CD8-positive, alpha-beta memory T cell (primary cell): ENCODE measurements at regions of chr15 and their contacts with region 1.

Region 1: GRCh38 chr15:78761891-78762385 is 49.3 kb downstream of the ADAMTS7 start:
- DNase-seq: no peak
- H3K4me3 ChIP-seq: peak overlapping the region; percentile 67
- H3K4me3 Mint-ChIP-seq: peak overlapping the region; percentile 29 to 72 (median 64)
- H3K27ac ChIP-seq: peak overlapping the region; percentile 24
- H3K27ac Mint-ChIP-seq: peak overlapping the region in 7 of 8 donors; percentile 57 to 98 (median 82)
- H3K4me1 ChIP-seq: peaks cover 22% of the 10 kb centered on the region
- H3K4me1 Mint-ChIP-seq: peaks cover 17 to 28% (median 22%) of the 10 kb centered on the region in 3 donors
- H3K27me3 ChIP-seq: no peaks in the 10 kb centered on the region
- H3K27me3 Mint-ChIP-seq: no peaks in the 10 kb centered on the region

Region 2: DNA sequence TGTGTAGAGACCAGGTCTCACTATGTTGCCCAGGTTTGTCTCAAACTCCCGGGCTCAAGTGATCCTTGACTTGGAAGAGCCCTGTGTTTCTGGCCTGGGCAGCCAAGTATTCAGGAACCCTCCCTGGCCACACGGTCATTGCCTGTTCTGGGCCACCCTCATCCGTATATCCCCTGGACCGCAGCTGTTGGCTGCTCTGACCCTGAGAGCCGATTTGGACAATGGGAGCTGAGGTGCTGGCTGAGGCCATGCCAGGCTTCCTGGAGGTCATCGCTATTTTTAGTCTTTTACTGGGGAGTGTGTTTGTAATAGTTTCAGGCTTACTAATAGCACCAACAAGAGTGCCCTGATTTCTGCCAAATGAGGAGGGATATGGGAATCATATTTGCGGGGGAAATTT is 11.4 kb before region 1 on chr15:
- CTCF ChIA-PET with region 1: interaction called, 12 read pairs
- POLR2A ChIA-PET with region 1: no interaction called
- DNase-seq: no peak
- H3K4me3 ChIP-seq: no peak overlapping the region
- H3K4me3 Mint-ChIP-seq: peak overlapping the region in 5 of 7 donors; percentile 55 to 76 (median 57)
- H3K27ac ChIP-seq: no peak overlapping the region
- H3K27ac Mint-ChIP-seq: peak overlapping the region in 2 of 8 donors; percentile 32 to 43
- H3K4me1 ChIP-seq: no peaks in the 10 kb centered on the region
- H3K4me1 Mint-ChIP-seq: peaks cover 3 to 9% (median 5%) of the 10 kb centered on the region in 3 donors
- H3K27me3 ChIP-seq: no peaks in the 10 kb centered on the region
- H3K27me3 Mint-ChIP-seq: no peaks in the 10 kb centered on the region